ENCODE measurements at regions of chr12 and their contacts with region 1.

Region 1: GRCh38 chr12:93742110-93742934 is 65.1 kb downstream of the CRADD start:
- DNase-seq: peak; percentile 60
- ATAC-seq: peak; percentile 97
- H3K4me3 ChIP-seq: peak overlapping the region; percentile 65
- H3K27ac ChIP-seq: peak overlapping the region; percentile 65
- H3K4me1 ChIP-seq: peaks cover 5% of the 10 kb centered on the region
- H3K27me3 ChIP-seq: no peaks in the 10 kb centered on the region
- CTCF ChIP-seq: peak; percentile 57
- POLR2A ChIP-seq: 0 out of 2 replicates have a peak, but pooled peaks have one; percentile 21
- RAD21 ChIP-seq: peak; percentile 69

Region 2: GRCh38 chr12:93591137-93591868 is 151.0 kb before region 1 on chr12:
- CTCF ChIA-PET with region 1: no interaction called
- POLR2A ChIA-PET with region 1: no interaction called
- dilution Hi-C with region 1: no loop called
- in situ Hi-C with region 1: no loop called
- intact Hi-C with region 1: loop called (anchors 1 kb)
- DNase-seq: peak; percentile 87
- ATAC-seq: peak; percentile 94
- H3K4me3 ChIP-seq: peak overlapping the region; percentile 52
- H3K27ac ChIP-seq: peak overlapping the region; percentile 78
- H3K4me1 ChIP-seq: no peaks in the 10 kb centered on the region; the same call in 1 of the 2 replicates
- H3K27me3 ChIP-seq: no peaks in the 10 kb centered on the region
- CTCF ChIP-seq: no peak
- POLR2A ChIP-seq: peak; percentile 85
- RAD21 ChIP-seq: 0 out of 2 replicates have a peak, but pooled peaks have one; percentile 1

Region 3: DNA sequence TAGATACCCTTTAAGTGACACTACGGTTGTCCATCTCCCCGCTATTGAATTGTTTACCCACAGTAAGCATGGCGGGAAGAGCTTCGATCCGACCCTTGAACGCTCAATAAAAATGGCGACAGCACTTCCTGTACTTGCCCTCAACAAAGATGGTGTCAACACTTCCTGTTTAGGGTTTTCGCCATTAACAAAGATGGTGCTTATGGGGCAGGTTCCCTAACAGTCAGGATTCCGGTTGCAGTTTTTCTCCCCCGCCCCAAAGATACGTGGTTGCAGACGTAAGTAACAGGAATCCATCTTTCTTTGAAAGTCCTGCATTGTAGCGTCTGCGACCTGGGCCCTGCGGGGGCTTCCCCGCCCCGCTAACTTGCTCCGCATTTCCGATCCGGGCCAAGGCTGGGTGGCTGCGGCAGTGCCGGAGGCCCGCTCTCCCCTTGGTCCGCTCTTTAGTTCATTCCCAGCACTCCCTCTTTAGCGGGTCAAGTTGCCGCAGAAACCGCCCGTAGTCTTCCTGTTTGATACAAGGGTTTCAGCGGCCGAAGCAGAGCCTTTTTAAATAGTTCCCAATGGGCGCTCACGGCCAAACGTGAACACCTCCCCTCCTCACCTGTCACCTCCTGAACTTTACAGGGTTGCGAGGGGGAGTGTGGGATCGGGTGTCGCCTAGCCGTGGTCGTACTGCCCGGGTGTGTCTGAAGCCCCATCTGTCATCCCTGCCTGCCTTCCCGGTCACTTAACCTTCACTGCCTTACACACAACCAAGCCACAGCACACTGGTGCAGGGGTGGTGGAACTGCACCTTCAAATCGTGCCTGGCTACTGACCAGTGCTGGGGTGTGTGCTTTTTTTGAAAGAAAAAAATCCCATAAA is 64.9 kb before region 1 on chr12 and contains the start of gene CRADD:
- CTCF ChIA-PET with region 1: no interaction called
- POLR2A ChIA-PET with region 1: no interaction called
- dilution Hi-C with region 1: no loop called
- in situ Hi-C with region 1: no loop called
- intact Hi-C with region 1: loop called (anchors 5 kb)
- DNase-seq: peak; percentile 99
- ATAC-seq: peak; percentile 96
- H3K4me3 ChIP-seq: peak within 1 kb of the TSS; percentile 55
- H3K27ac ChIP-seq: peak within 1 kb of the TSS; percentile 87
- H3K4me1 ChIP-seq: peaks cover 2% of the 10 kb centered on the region; the same call in 1 of the 2 replicates
- H3K27me3 ChIP-seq: no peaks in the 10 kb centered on the region
- CTCF ChIP-seq: no peak
- POLR2A ChIP-seq: peak; percentile 86
- RAD21 ChIP-seq: 0 out of 2 replicates have a peak, but pooled peaks have one; percentile 4
- total RNA-seq, gene CRADD: 12.2 and 14.0 TPM in 2 replicates

Region 4: DNA sequence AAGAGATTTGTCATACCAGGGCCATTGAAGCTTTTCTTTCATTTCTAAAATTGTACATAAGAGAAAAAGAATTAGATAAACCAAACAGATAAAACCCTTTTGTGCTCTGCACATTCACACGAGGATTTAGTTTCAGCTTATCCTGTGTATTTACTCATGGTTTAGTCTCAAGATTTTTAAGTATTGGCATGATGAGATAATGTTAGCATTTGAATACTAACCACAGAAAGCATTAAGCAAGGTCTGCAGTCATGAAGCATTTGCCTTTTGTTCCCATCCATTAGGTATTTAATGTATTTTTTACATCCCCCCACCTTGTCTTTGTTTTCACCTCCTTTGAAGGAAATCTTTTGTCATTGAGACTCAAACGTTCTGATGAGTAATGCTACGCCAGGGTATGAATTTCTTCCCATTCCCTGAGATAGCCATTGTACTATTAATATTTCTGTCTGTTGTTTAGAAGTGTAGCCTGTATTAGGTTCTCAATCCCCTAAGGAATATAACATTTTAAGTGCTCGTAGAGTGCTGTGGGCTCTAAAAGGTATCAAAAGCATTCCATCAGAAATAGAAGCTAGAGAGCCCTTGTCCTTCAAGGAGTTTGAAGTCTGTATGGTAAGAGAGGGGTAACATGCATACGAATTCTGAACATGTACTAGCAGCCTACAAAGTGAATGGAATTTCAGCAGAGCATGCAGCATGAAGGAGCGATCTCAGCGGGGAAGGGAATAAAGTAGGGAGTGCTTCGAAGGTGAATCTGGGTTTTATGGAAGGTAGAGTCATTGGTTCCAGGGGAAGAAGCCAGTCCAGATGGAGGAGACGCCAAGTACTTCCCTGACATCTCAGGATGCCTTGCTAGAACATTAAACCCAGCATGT is 42.8 kb before region 1 on chr12:
- CTCF ChIA-PET with region 1: no interaction called
- POLR2A ChIA-PET with region 1: no interaction called
- dilution Hi-C with region 1: no loop called
- in situ Hi-C with region 1: no loop called
- intact Hi-C with region 1: loop called (anchors 5 kb)
- DNase-seq: peak; percentile 93
- ATAC-seq: peak; percentile 79
- H3K4me3 ChIP-seq: no peak overlapping the region
- H3K27ac ChIP-seq: no peak overlapping the region
- H3K4me1 ChIP-seq: peaks cover 16% of the 10 kb centered on the region
- H3K27me3 ChIP-seq: no peaks in the 10 kb centered on the region
- CTCF ChIP-seq: no peak
- POLR2A ChIP-seq: no peak
- RAD21 ChIP-seq: no peak

Region 5: GRCh38 chr12:93879476-93880421 is 137.4 kb after region 1 on chr12:
- CTCF ChIA-PET with region 1: no interaction called
- POLR2A ChIA-PET with region 1: no interaction called
- dilution Hi-C with region 1: no loop called
- in situ Hi-C with region 1: no loop called
- intact Hi-C with region 1: no loop called
- DNase-seq: peak; percentile 92
- ATAC-seq: peak; percentile 94
- H3K4me3 ChIP-seq: no peak overlapping the region
- H3K27ac ChIP-seq: peak overlapping the region; percentile 75
- H3K4me1 ChIP-seq: peaks cover 27% of the 10 kb centered on the region
- H3K27me3 ChIP-seq: no peaks in the 10 kb centered on the region
- CTCF ChIP-seq: no peak
- POLR2A ChIP-seq: no peak
- RAD21 ChIP-seq: 0 out of 2 replicates have a peak, but pooled peaks have one; percentile 17